Endothelial cell of umbilical vein (primary cell): ENCODE measurements at regions of chr4 and their contacts with region 1.

Region 1: GRCh38 chr4:145481164-145481941 is at the start of gene SMAD1:
- DNase-seq: peak; percentile 76
- H3K4me3 ChIP-seq: peak within 1 kb of the TSS; percentile 82 to 99 (median 98)
- H3K27ac ChIP-seq: peak within 1 kb of the TSS; percentile 60
- H3K4me1 ChIP-seq: peaks cover 18% of the 10 kb centered on the region
- H3K27me3 ChIP-seq: no peaks in the 10 kb centered on the region
- CTCF ChIP-seq: no peak
- POLR2A ChIP-seq: peak; percentile 59
- total RNA-seq, gene SMAD1: 93.5 and 101 TPM in 2 replicates

Region 2: DNA sequence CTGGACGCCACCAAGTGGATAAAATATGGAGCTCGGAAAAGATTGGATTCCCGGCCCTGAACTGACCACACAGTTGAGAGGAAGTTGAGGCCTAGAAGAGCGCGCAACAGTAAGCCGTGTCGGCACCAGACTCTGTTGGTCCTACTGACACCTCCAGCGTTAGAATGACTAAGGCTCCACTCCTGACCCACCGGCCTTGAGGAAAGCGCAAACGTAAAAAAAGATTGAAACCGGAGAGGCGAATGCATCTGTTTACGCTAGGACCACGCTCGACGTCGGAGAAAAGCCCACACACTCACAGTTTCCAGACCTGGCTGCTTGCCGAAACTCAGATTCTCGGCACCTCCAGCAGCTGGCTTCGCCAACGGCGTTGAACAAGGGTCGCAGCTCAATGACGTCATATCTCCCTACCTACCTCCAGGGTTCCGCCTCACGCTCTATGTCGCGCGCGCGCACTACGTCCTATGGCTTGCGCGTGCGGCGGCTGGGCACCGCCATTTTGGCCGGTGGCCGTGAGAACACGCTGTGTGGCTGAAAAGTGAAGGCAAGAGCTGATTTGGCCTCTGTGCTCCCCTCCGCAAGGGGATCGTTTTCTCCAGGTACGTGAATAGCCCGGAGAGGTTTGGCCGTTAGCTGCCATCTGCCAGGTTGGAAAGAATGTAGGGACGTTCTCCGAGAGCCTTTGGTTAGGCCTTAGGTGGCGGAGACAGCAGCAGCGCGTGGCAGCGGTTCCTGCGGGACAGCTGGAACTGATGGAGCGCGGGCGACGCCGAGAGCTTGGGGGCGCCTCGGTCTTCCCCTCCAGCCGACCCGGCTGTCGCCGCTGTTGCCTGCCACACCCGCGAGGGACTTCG is 383.3 kb before region 1 on chr4 and contains the starts of genes ABCE1 and ANAPC10:
- CTCF ChIA-PET with region 1: no interaction called
- POLR2A ChIA-PET with region 1: no interaction called
- dilution Hi-C with region 1: no loop called
- intact Hi-C with region 1: loop called (anchors 5 kb)
- DNase-seq: peak; percentile 98
- H3K4me3 ChIP-seq: peak within 1 kb of the TSS; percentile 45 to 95 (median 66)
- H3K27ac ChIP-seq: peak within 1 kb of the TSS; percentile 74
- H3K4me1 ChIP-seq: peaks cover 35% of the 10 kb centered on the region
- H3K27me3 ChIP-seq: no peaks in the 10 kb centered on the region
- CTCF ChIP-seq: peak in 1 of 2 donors; percentile 11
- POLR2A ChIP-seq: peak; percentile 82
- total RNA-seq, gene ABCE1: 107 and 114 TPM in 2 replicates
- total RNA-seq, gene ANAPC10: 21.4 and 24.0 TPM in 2 replicates

Region 3: DNA sequence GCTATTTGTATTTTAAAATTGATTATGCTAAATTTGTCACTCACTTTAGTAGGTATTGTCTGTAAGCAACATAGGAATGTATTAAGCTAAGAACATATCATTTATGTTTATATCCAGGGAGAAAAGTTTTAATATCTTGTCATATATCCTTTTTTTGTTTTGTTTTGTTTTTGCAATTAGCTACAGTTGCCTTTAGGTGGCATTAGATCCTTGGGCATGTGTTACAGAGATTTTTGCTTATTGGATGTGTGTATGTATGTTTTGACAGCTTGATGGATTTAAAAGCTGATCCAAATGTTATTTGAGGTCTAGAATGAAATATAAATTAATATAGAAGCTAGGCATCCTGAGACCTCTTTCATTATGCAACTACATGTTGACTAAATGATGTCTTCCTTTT is 264.8 kb before region 1 on chr4:
- CTCF ChIA-PET with region 1: interaction called, 5 read pairs
- POLR2A ChIA-PET with region 1: no interaction called
- dilution Hi-C with region 1: no loop called
- intact Hi-C with region 1: loop called (anchors 5 kb)
- DNase-seq: peak; percentile 64
- H3K4me3 ChIP-seq: no peak overlapping the region
- H3K27ac ChIP-seq: no peak overlapping the region
- H3K4me1 ChIP-seq: peaks cover 4% of the 10 kb centered on the region
- H3K27me3 ChIP-seq: peaks cover 4 to 5% of the 10 kb centered on the region in 2 experiments
- CTCF ChIP-seq: peak; percentile 28 to 34
- POLR2A ChIP-seq: no peak

Region 4: GRCh38 chr4:145388043-145388442 is 93.3 kb before region 1 on chr4:
- CTCF ChIA-PET with region 1: no interaction called
- POLR2A ChIA-PET with region 1: no interaction called
- dilution Hi-C with region 1: no loop called
- intact Hi-C with region 1: loop called (anchors 1 kb)
- DNase-seq: peak; percentile 80
- H3K4me3 ChIP-seq: peak overlapping the region in 1 of 3 experiments; percentile 32
- H3K27ac ChIP-seq: peak overlapping the region; percentile 67
- H3K4me1 ChIP-seq: peaks cover 25% of the 10 kb centered on the region
- H3K27me3 ChIP-seq: no peaks in the 10 kb centered on the region
- CTCF ChIP-seq: no peak
- POLR2A ChIP-seq: no peak

Region 5: GRCh38 chr4:145545538-145546174 is 64.3 kb after region 1 on chr4:
- CTCF ChIA-PET with region 1: interaction called, 8 read pairs
- POLR2A ChIA-PET with region 1: interaction called, 5 read pairs
- dilution Hi-C with region 1: no loop called
- intact Hi-C with region 1: loop called (anchors 1 kb)
- DNase-seq: peak; percentile 100
- H3K4me3 ChIP-seq: peak overlapping the region in 1 of 3 experiments; percentile 58
- H3K27ac ChIP-seq: peak overlapping the region; percentile 98
- H3K4me1 ChIP-seq: peaks cover 43% of the 10 kb centered on the region
- H3K27me3 ChIP-seq: no peaks in the 10 kb centered on the region
- CTCF ChIP-seq: no peak
- POLR2A ChIP-seq: peak; percentile 73

Region 6: GRCh38 chr4:145732895-145733880 is 251.8 kb after region 1 on chr4:
- CTCF ChIA-PET with region 1: no interaction called
- POLR2A ChIA-PET with region 1: no interaction called
- dilution Hi-C with region 1: no loop called
- intact Hi-C with region 1: loop called (anchors 5 kb)
- DNase-seq: peak; percentile 97
- H3K4me3 ChIP-seq: peak overlapping the region; percentile 38 to 69 (median 51)
- H3K27ac ChIP-seq: peak overlapping the region; percentile 94
- H3K4me1 ChIP-seq: peaks cover 42% of the 10 kb centered on the region
- H3K27me3 ChIP-seq: no peaks in the 10 kb centered on the region
- CTCF ChIP-seq: no peak
- POLR2A ChIP-seq: peak; percentile 73

Region 7: GRCh38 chr4:145912376-145912775 is 431.0 kb after region 1 on chr4:
- CTCF ChIA-PET with region 1: no interaction called
- POLR2A ChIA-PET with region 1: no interaction called
- dilution Hi-C with region 1: no loop called
- intact Hi-C with region 1: no loop called
- DNase-seq: no peak
- H3K4me3 ChIP-seq: no peak overlapping the region
- H3K27ac ChIP-seq: no peak overlapping the region
- H3K4me1 ChIP-seq: no peaks in the 10 kb centered on the region
- H3K27me3 ChIP-seq: no peaks in the 10 kb centered on the region
- CTCF ChIP-seq: no peak
- POLR2A ChIP-seq: no peak